GM10248 (cell line): ENCODE measurements at regions of chr5 and their contacts with region 1.

Region 1: GRCh38 chr5:103582364-103582763 is 19.8 kb upstream of the NUDT12 start:
- DNase-seq: no peak
- CTCF ChIP-seq: peak; percentile 33

Region 2: GRCh38 chr5:104178829-104179456 is 596.6 kb after region 1 on chr5:
- CTCF ChIA-PET with region 1: interaction called, 11 read pairs
- POLR2A ChIA-PET with region 1: no interaction called
- DNase-seq: peak; percentile 10
- CTCF ChIP-seq: peak; percentile 26